Activated B cell treated with CpG ODN at 0.5 μM for 24 hours (primary cell): ENCODE measurements at regions of chr16 and their contacts with region 1.

Region 1: GRCh38 chr16:67780847-67781564 is 25.4 kb downstream of the RANBP10 start:
- DNase-seq: no peak
- ATAC-seq: no peak
- H3K4me3 Mint-ChIP-seq: no peak overlapping the region
- H3K27ac Mint-ChIP-seq: peak overlapping the region; percentile 60
- H3K4me1 Mint-ChIP-seq: peaks cover 24% of the 10 kb centered on the region
- H3K27me3 Mint-ChIP-seq: no peaks in the 10 kb centered on the region
- CTCF ChIP-seq: no peak

Region 2: GRCh38 chr16:67736858-67737257 is 44.1 kb before region 1 on chr16:
- CTCF ChIA-PET with region 1: no interaction called
- POLR2A ChIA-PET with region 1: no interaction called
- intact Hi-C with region 1: no loop called
- DNase-seq: no peak
- ATAC-seq: no peak
- H3K4me3 Mint-ChIP-seq: no peak overlapping the region
- H3K27ac Mint-ChIP-seq: no peak overlapping the region
- H3K4me1 Mint-ChIP-seq: no peaks in the 10 kb centered on the region
- H3K27me3 Mint-ChIP-seq: no peaks in the 10 kb centered on the region
- CTCF ChIP-seq: no peak

Region 3: DNA sequence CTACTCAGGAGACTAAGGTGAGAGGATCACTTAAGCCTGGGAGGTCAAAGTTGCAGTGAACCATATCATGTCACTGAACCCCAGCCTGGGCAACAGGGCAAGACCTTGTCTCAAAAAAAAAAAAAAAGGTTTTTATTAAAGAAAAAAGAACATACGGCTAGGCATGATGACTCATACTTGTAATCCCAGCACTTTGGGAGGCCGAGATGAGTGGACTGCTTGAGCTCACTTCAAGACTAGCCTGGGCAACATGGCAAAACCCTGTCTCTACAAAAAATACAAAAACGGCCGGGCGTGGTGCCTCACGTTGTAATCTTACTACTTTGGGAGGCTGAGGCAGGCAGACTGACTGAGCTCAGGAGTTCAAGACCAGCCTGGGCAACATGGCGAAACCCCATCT is 13.1 kb before region 1 on chr16:
- CTCF ChIA-PET with region 1: no interaction called
- POLR2A ChIA-PET with region 1: interaction called, 12 read pairs
- intact Hi-C with region 1: no loop called
- DNase-seq: no peak
- ATAC-seq: no peak
- H3K4me3 Mint-ChIP-seq: no peak overlapping the region
- H3K27ac Mint-ChIP-seq: no peak overlapping the region
- H3K4me1 Mint-ChIP-seq: no peaks in the 10 kb centered on the region
- H3K27me3 Mint-ChIP-seq: no peaks in the 10 kb centered on the region
- CTCF ChIP-seq: no peak